ENCODE measurements at regions of chr7 and their contacts with region 1.

Region 1: DNA sequence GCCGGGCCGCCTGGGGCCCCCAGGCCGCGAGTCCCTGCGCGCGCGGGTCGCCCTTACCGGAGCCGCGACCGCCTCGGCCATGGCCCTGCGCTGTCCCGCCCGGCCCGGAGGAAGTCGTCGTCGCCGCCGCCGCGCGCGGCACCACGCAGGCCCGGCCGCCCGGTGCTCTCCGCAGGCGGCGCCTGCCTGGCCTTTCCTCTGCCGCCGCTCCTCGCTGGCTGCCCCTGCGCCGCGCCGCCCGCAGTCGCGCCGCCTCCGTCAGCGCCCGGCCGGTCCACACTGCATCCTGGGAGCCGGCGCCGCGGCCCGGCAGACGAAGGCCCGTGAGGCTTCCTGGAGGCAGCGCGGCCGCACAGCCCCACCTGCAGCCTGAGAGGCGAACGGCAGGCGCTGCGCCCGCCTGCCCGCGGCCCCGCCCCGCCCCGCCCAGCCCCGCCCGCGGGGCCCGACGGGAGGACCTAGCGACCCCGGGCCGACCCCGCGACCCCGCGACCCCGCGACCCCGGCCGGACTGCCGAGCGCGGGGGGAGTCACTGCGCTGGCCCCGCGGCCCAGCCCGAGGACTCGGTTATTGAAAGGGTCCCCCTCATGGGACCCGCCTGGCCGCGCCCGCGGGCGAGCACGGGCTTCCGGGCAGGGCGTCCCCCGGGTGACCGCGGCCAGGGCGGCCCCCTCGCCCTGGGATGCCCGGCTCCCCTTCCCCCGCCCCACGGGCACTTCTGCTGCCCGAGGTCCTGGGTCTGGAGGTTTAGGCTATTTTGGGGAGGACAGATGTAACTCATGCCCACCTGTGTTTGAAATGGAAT is at the start of gene ZNF746:
- DNase-seq: peak; percentile 53 to 85 (median 72)
- H3K4me3 ChIP-seq: peak within 1 kb of the TSS; percentile 48 to 83 (median 71)
- H3K27ac ChIP-seq: peak within 1 kb of the TSS in 49 of 59 donors; percentile 26 to 90 (median 69)
- H3K27me3 ChIP-seq: no peaks in the 10 kb centered on the region
- CTCF ChIP-seq: peak in 47 of 56 donors; percentile 6 to 76 (median 45)
- total RNA-seq, gene ZNF746: 17.9 to 38.3 (median 26.7) TPM

Region 2: DNA sequence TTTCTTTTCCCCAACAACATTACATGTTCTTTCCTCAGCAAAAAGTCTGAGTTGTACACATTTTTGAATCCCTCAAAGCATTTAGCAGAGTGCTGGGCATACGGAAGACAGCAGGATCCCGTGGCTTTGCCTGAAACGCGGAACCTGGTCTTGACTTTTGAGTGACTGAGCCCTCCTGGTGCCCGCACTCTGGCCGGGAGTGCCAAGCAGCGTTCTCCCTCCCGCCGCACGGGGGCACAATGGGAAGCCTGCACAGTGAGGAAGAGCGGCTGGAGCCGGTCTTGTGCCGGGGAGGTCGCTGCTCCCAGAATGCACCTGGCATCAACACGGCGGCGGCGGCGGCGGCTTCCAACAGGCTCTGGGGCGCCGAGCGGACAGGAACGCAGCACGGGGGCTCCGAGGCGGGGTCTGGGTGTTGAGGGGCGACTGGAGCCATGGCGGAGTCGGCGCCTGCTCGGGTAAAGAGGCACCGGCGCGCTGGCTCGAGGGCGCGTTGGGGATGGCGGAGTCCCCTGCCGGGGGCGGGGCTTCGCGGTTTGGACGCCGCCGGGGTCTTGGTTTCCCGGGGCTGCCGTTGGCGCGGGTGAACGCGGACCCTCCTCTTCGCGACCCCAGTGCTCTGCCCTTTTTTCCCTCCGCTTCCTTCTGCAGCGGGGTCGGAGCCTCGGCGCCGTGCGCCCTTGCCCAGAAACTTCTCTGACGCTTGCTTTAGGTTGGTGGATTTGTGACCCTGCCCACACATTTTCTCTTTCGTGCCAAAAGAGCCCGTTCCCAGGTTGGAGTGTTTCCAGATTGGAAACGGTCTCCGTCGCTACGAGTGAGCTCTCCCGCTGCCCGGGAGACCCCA is 258.1 kb before region 1 on chr7 and contains the start of gene ZNF212:
- intact Hi-C with region 1: loop called in 1 of 2 experiments (anchors 5 kb)
- DNase-seq: peak; percentile 81 to 93 (median 90)
- H3K4me3 ChIP-seq: peak within 1 kb of the TSS; percentile 57 to 100 (median 95)
- H3K27ac ChIP-seq: peak within 1 kb of the TSS in 51 of 59 donors; percentile 12 to 92 (median 66)
- H3K27me3 ChIP-seq: no peaks in the 10 kb centered on the region
- CTCF ChIP-seq: peak; percentile 81 to 99 (median 94)
- total RNA-seq, gene ZNF212: 7.7 to 14.7 (median 10.7) TPM

Region 3: DNA sequence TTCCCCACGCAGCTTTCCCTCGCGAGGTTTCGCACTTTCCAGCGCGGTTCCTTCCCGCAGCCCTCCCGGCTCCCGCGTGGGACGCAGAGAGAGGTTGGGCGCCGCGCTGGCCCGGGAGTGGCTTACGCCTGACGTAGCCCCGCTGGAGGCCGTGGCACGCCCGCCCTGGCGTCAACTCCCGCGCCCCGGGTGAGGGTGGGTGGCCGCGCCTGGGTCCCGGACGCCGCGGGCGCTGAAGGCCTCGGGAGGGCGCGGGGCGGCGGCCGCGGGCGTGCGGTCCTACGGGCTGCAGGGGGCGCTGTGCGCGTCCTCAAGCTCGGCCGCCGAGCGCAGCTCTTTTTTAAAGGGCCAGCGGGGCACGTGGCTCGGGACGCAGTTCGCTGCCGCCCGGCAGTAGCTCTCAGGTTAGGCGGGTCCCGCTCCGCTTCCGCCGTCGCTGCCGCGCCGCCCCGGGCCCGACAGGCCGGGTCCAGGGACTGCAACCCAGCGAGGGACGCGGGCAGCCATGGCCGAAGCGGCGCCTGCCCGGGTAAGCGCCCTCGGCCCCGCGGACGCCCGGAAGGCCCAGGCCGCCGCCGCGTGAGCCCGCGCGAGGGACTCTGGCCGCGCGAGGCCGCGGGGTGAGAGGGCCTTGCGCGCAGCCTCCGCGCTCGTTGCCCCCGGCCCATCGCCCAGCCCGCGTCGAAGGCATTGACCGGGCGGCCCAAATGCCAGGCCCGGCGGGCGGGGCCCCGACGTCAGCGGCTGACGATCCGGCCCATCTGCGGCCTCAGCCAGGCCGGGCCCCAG is 235.6 kb before region 1 on chr7 and contains the start of gene ZNF783:
- intact Hi-C with region 1: loop called (anchors 5 kb)
- DNase-seq: peak; percentile 77 to 90 (median 83)
- H3K4me3 ChIP-seq: peak within 1 kb of the TSS; percentile 47 to 87 (median 74)
- H3K27ac ChIP-seq: peak within 1 kb of the TSS; percentile 43 to 94 (median 88)
- H3K27me3 ChIP-seq: no peaks in the 10 kb centered on the region
- CTCF ChIP-seq: peak; percentile 47 to 99 (median 82)
- total RNA-seq, gene ZNF783: 15.2 to 39.8 (median 23.8) TPM

Region 4: DNA sequence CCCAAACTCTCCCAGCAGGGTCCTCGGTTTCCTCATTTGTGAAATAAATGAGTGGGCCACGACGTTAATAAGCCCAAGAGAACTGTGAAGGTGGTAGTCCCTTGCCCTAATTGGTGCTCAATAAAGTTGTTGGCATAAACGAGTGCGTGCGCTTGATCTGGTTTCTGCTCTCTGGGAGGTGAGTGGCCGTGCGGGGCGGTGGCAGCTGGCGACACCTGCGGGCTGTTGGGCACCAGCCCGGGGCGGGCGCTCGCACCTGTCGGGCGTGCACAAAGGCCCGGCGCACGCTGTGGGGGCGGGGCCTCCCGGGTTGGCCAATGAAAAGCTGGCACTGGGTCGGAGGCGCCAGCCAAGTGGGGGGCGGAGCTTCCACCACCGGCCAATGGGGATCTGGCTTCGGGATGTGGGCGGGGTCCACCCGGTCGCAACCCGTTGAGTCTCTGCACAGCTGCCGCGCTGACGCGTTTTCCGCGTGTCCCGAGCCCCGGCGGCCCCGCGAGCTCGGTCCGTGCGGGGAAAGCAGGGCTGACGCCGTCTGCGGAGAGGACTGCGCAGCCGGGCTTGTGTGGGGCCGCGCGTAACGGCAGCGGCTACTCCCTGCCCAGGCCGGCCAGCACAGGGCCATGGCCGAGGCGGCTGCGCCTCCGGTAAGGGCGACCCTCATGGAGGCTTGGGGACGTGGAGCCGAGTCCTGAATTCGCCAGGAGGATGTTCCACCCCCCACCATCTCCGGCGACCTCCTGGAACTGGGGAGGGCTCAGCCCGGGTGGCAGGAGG is 212.6 kb before region 1 on chr7:
- intact Hi-C with region 1: no loop called
- DNase-seq: peak; percentile 93 to 97 (median 96)
- H3K4me3 ChIP-seq: peak overlapping the region; percentile 54 to 98 (median 79)
- H3K27ac ChIP-seq: peak overlapping the region in 24 of 59 donors; percentile 0 to 67 (median 36)
- H3K27me3 ChIP-seq: no peaks in the 10 kb centered on the region
- CTCF ChIP-seq: peak in 24 of 56 donors; percentile 8 to 45 (median 23)

Region 5: DNA sequence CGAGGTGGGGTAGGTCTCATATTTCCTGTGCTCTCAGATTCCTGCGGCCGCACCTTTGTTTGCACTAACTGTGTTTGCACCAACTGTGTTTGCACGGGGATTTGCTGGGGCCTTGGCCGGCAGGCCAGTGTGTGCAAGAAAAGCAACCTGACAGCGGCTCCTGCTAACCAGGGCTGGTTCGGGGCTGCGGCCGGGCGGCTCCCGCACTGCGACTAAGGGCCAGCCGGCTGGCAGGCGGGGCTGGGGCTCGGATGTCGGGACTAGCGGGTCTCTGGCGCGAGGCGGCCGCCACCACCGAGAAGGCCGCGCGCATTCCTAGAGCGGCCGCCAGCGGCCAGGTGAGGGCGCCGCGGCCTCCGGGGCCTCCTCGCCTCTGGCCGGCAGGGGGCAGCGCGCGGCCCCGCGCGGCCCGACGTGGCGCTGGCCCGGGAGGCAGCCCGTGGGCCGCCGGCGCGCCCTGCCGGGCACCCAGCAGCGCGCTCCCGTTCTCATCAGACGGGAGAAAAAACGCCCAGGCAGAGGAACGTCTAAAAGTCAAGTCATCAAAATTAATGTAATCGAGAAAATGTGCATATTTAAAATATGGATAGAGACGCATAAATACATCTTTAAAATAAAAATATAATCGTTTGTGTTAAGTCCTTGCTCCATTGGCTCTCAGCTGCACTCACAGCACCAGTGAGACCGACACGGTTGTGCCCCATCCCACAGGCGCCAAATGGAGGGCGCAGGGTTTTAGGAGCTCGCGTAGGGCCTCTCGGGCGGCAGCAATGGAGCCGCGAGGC is 75.3 kb before region 1 on chr7:
- intact Hi-C with region 1: loop called (anchors 5 kb)
- DNase-seq: peak in 2 of 10 donors; percentile 65 to 72
- H3K4me3 ChIP-seq: peak overlapping the region; percentile 29 to 69 (median 57)
- H3K27ac ChIP-seq: peak overlapping the region in 8 of 59 donors; percentile 20 to 68 (median 46)
- H3K27me3 ChIP-seq: no peaks in the 10 kb centered on the region
- CTCF ChIP-seq: peak in 52 of 56 donors; percentile 28 to 75 (median 56)

Region 6: GRCh38 chr7:149460493-149461277 is 37.0 kb before region 1 on chr7 and contains the start of gene ZNF777:
- intact Hi-C with region 1: loop called (anchors 5 kb)
- DNase-seq: peak; percentile 60 to 88 (median 83)
- H3K4me3 ChIP-seq: peak within 1 kb of the TSS; percentile 50 to 92 (median 78)
- H3K27ac ChIP-seq: peak within 1 kb of the TSS in 53 of 59 donors; percentile 29 to 92 (median 74)
- H3K27me3 ChIP-seq: no peaks in the 10 kb centered on the region
- CTCF ChIP-seq: peak in 54 of 56 donors; percentile 11 to 65 (median 51)
- total RNA-seq, gene ZNF777: 9.8 to 20.4 (median 15.0) TPM

Region 7: DNA sequence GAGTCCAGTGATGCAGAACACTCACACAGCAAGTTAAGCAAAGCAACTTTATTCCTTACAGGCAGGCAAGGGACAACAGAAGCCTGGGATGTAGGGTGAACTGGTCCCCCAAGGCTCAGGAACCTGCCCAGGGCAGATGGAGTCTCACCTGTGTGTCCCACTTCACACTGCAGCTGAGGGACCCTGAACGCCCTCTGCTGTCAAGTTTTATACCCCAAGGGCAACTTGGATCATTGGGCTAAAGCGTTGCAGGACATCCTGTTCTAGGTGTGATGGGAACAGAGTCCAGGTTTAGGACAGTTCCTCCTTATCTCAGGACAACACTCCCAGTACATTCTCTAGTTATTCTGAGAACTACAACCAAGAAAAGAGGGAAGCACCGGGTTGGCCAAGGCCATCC is 49.5 kb after region 1 on chr7:
- intact Hi-C with region 1: no loop called
- DNase-seq: no peak
- H3K4me3 ChIP-seq: no peak overlapping the region
- H3K27ac ChIP-seq: no peak overlapping the region
- H3K27me3 ChIP-seq: no peaks in the 10 kb centered on the region
- CTCF ChIP-seq: no peak

Region 8: DNA sequence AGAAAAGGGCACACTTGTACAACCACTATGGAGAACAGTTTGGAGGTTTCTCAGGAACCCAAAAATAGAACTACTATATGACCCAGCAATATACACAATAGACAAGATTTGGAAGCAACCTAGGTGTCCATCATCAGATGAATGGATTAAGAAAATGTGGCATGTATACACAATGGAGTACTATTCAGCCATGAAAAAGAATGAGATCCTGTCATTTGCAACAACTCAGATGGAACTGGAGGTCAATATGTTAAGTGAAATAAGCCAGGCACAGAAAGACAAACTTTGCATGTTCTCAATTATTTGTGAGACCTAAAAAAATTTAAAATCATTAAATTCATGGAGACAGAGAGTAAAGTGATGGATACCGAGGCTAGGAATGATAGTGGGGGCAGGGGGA is 156.9 kb after region 1 on chr7:
- intact Hi-C with region 1: no loop called
- DNase-seq: no peak
- H3K4me3 ChIP-seq: no peak overlapping the region
- H3K27ac ChIP-seq: no peak overlapping the region
- H3K27me3 ChIP-seq: no peaks in the 10 kb centered on the region
- CTCF ChIP-seq: no peak